ENCODE measurements at regions of chr20 and their contacts with region 1.

Region 1: DNA sequence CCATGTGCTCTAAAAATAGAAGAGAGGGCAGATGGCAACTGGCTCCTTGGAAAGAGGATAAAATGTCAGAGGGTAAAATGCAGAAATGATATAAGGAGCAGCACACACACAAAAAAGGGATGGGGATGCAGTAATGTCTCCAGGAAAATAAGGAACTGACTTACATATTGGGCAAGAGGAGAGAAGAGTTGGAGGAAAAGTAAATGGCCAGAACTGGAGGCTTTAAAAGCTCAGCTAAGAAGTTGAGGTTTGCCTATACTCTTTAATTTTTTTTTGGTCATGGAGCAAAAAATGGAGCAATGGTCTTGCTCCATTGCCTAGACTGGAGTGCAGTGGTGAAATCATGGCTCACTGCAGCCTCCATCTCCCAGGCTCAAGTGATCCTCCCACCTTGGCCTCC is 93.7 kb downstream of the SULF2 start:
- H3K4me3 Mint-ChIP-seq: no peak overlapping the region
- H3K27ac Mint-ChIP-seq: peak overlapping the region; percentile 17
- H3K4me1 Mint-ChIP-seq: peaks cover 83% of the 10 kb centered on the region
- H3K27me3 Mint-ChIP-seq: no peaks in the 10 kb centered on the region

Region 2: DNA sequence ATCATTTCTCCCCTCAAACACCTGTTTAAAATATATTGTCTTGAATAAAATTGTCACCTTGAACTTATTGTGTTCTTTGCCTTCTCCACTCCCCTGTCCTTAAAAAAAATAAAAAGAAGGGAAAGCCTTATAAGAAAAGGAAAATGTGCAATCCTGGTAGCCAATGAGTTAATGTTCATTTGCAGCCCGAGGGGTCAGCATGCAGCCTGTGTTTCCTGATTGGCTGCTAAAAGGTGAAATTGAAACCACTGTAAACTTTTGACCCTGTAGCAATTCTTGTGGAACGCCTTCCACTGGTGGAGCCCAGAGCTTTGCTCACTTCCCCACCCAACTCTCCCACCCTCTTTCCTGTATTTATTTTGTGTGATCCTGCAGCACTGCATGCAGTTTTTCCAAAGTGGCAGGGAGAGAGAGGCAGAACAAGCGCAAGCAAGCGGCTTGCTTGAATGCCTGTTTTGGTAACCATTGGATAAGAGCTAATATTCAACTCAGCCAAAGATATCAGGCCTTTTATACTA is 115.0 kb before region 1 on chr20:
- intact Hi-C with region 1: no loop called
- H3K4me3 Mint-ChIP-seq: no peak overlapping the region
- H3K27ac Mint-ChIP-seq: no peak overlapping the region
- H3K4me1 Mint-ChIP-seq: peaks cover 49% of the 10 kb centered on the region
- H3K27me3 Mint-ChIP-seq: no peaks in the 10 kb centered on the region

Region 3: DNA sequence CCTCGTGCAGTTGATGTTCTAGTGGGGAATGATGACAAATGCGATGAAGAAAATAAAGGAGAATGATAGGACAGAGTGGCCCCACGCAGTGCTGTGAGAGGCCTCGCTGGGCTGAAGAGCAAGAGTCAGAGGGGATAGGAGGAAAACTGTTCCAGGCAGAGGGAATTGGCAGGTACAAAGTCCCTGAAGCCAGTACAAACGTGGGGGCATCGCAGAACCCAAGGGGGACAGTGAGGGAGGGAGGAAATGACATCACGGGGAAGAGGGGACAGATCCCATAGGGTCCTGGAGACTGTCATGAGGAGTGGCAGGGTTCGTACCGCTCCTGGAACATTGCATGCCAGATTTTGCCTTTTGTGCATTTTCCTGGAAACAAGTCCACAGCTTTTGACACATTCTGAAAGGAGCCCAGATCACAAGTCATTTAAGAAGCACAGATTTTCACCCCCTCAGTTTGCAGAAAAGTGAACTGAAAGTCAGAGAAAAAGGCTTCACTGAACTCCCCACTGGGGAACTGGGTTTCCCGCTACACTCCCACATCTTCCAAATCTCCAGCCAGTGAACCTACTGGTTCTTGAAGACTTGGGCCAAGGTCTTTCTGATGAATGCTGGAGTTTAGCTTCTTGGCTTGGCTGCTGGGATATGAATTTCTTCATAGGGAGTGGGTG is 16.6 kb after region 1 on chr20:
- intact Hi-C with region 1: loop called (anchors 1 kb)
- H3K4me3 Mint-ChIP-seq: no peak overlapping the region
- H3K27ac Mint-ChIP-seq: peak overlapping the region; percentile 93
- H3K4me1 Mint-ChIP-seq: peaks cover 97% of the 10 kb centered on the region
- H3K27me3 Mint-ChIP-seq: no peaks in the 10 kb centered on the region

Region 4: GRCh38 chr20:47824977-47825762 is 133.5 kb after region 1 on chr20:
- intact Hi-C with region 1: no loop called
- H3K4me3 Mint-ChIP-seq: no peak overlapping the region
- H3K27ac Mint-ChIP-seq: no peak overlapping the region
- H3K4me1 Mint-ChIP-seq: peaks cover 9% of the 10 kb centered on the region
- H3K27me3 Mint-ChIP-seq: peaks cover 32% of the 10 kb centered on the region